Dorsolateral prefrontal cortex (tissue), 120 donors: ENCODE measurements at regions of chr10 and their contacts with region 1.

Region 1: GRCh38 chr10:89251409-89252224 is at the start of gene LIPA:
- DNase-seq: peak; percentile 93 to 98 (median 96)
- H3K4me3 ChIP-seq: peak within 1 kb of the TSS; percentile 73 to 100 (median 95)
- H3K27ac ChIP-seq: peak within 1 kb of the TSS; percentile 79 to 99 (median 94)
- H3K27me3 ChIP-seq: no peaks in the 10 kb centered on the region
- CTCF ChIP-seq: peak in 38 of 56 donors; percentile 6 to 57 (median 33)
- total RNA-seq, gene LIPA: 39.5 to 269 (median 82.3) TPM

Region 2: GRCh38 chr10:89391917-89392756 is 140.5 kb after region 1 on chr10 and contains the start of gene IFIT1:
- intact Hi-C with region 1: loop called in 1 of 2 experiments (anchors 5 kb)
- DNase-seq: peak in 6 of 10 donors; percentile 40 to 65 (median 55)
- H3K4me3 ChIP-seq: peak within 1 kb of the TSS; percentile 41 to 84 (median 68)
- H3K27ac ChIP-seq: peak within 1 kb of the TSS; percentile 11 to 98 (median 93)
- H3K27me3 ChIP-seq: no peaks in the 10 kb centered on the region
- CTCF ChIP-seq: peak in 9 of 56 donors; percentile 2 to 41 (median 15)
- total RNA-seq, gene IFIT1: 23.2 to 313 (median 49.2) TPM

Region 3: DNA sequence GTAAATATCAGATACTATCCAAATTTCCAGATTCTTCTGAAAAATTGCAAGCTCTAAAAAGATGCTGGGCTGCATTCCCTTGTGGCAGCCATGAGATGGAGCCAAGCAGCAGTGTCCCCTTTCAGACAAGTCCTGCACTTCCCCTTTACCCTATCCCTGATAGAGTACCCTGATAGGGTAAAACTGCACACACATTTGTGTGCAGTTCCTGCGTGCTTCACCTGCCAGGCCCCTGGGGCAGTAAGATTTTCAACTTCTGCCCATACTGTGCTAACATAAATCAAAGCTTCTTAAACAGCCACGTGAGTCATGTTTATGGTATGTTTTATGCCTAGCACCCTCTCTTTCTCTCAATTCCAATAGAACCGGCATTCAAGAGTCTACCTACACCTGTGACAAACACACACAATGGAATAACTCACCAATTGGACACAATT is 215.0 kb after region 1 on chr10:
- intact Hi-C with region 1: no loop called
- DNase-seq: no peak
- H3K4me3 ChIP-seq: no peak overlapping the region
- H3K27ac ChIP-seq: no peak overlapping the region
- H3K27me3 ChIP-seq: peaks cover 0 to under 1% (median 0%) of the 10 kb centered on the region in 45 donors
- CTCF ChIP-seq: peak in 26 of 56 donors; percentile 11 to 45 (median 28)

Region 4: DNA sequence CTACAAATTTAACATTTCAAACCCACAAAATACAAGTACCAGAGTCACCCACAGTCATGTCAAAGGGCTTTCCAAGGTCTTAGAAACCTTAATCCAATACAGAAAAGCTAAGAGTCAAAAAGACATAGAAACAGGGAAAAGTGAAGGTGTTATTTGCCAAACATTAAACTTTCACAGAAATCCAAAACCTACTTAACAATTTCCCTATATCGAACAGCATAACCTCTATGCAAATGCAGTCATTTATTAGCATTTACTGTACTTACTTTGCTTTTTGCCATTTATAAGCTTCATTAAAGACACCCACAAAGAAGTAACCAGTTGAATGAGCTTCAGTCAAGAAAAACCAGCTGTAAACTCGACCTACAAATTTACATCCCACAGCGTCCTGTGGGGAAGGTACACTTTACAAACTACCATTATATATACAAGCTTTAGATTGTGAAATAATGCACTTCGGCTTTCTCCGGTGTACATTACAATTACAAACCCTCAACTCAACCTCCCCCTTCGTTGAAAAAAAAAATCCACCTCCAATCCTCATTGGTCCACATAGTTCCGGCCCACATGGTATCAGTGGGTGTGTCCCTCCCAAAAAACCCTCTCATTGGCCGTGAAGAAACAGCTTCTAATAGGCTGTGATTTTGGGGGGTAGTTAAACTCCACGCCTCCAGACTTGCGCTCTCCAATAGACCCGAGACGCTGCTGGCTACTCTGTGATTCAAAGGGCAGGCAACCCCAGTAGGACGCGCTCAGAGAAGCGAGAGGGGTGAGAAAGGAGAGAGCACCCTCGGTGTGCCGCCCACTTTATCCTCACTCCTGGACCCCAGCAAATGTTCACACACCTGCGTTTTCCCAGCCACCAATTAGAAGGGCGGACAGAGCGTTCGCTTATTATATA is 392.1 kb after region 1 on chr10:
- intact Hi-C with region 1: loop called in 1 of 2 experiments (anchors 10 kb)
- DNase-seq: peak; percentile 47 to 92 (median 83)
- H3K4me3 ChIP-seq: peak overlapping the region; percentile 56 to 97 (median 83)
- H3K27ac ChIP-seq: peak overlapping the region; percentile 7 to 98 (median 89)
- H3K27me3 ChIP-seq: no peaks in the 10 kb centered on the region
- CTCF ChIP-seq: peak in 6 of 56 donors; percentile 9 to 18 (median 12)